A673 (cell line): ENCODE measurements at regions of chr6 and their contacts with region 1.

Region 1: DNA sequence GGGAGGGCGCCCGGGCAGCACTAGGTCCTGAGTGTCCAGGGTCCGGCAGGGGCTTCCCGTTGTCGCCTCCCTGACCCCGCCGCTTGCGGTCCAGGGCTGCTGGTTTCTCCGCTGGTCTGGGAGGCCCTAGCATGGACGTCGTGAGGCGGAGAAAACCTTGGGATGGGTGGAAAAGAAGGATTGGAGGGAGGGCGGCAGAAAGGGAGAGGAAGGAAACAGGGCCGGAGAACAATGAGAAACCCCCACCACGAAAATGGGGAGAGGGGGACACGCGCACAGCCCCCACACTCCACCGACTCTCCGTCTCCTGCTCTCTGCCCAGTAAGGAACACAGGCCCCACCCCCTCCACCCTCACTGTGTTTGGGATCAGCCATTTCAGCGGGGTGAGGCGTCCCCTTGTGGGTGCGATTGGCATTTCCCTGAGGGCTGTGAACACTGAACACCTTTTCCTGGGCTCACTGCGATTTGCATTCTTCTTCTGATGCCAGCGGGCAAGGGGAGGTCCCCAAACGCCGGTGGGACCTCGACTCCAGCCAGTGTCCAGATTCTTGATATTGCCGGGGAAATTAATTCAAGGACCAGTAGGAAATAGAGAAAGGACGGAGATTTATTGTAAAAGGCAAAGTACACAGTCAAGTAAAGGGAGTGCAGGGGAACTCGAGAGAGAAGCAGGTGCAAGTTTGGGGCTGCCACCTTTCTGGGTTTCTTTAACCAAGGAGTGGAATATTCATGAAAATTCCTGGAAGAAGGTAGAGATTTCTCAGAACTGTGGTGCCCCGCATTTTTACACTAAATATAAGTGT is 3.3 kb upstream of the RAET1G start:
- DNase-seq: peak; percentile 90
- H3K4me3 ChIP-seq: peak overlapping the region; percentile 59
- H3K27ac ChIP-seq: no peak overlapping the region
- H3K4me1 ChIP-seq: peaks cover 12% of the 10 kb centered on the region
- H3K27me3 ChIP-seq: peaks cover 19% of the 10 kb centered on the region
- CTCF ChIP-seq: peak; percentile 93

Region 2: DNA sequence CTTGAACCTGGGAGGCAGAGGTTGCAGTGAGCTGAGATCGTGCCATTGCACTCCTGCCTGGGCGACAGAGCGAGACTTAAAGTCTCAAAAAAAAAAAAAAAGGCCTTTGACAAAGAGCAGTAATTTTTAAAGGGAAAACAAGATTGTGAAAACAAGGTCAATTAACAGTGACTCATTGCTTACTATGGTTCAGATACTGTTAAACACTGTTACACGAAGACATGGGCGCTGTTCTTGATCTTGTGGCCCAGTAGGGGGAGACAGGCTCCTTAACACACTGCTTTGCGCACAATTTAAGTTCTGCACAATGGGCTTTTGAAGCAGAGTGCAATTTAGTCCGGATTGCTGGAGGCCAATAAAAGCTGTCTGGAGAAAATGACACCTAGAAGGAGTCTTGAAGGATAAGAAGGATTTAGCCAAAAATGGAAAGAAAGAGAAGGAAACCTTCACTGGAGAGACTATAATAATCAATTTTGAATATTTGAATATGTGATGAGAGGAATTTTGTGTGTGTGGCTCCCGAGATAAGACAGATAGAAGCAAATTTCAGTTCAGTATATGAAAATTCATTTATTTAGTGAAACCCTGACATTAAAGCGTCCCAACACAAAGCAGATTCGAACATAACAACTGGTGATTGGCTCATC is 202.3 kb before region 1 on chr6:
- CTCF ChIA-PET with region 1: no interaction called
- POLR2A ChIA-PET with region 1: no interaction called
- intact Hi-C with region 1: loop called (anchors 2 kb)
- DNase-seq: peak; percentile 88
- H3K4me3 ChIP-seq: no peak overlapping the region
- H3K27ac ChIP-seq: no peak overlapping the region
- H3K4me1 ChIP-seq: no peaks in the 10 kb centered on the region
- H3K27me3 ChIP-seq: no peaks in the 10 kb centered on the region
- CTCF ChIP-seq: peak; percentile 89

Region 3: GRCh38 chr6:150208611-150209352 is 282.6 kb after region 1 on chr6:
- CTCF ChIA-PET with region 1: no interaction called
- POLR2A ChIA-PET with region 1: no interaction called
- intact Hi-C with region 1: no loop called
- DNase-seq: peak; percentile 59
- H3K4me3 ChIP-seq: no peak overlapping the region
- H3K27ac ChIP-seq: no peak overlapping the region
- H3K4me1 ChIP-seq: no peaks in the 10 kb centered on the region
- H3K27me3 ChIP-seq: no peaks in the 10 kb centered on the region
- CTCF ChIP-seq: no peak